Transverse colon (tissue), 4 donors: ENCODE measurements at regions of chr12 and their contacts with region 1.

Region 1: DNA sequence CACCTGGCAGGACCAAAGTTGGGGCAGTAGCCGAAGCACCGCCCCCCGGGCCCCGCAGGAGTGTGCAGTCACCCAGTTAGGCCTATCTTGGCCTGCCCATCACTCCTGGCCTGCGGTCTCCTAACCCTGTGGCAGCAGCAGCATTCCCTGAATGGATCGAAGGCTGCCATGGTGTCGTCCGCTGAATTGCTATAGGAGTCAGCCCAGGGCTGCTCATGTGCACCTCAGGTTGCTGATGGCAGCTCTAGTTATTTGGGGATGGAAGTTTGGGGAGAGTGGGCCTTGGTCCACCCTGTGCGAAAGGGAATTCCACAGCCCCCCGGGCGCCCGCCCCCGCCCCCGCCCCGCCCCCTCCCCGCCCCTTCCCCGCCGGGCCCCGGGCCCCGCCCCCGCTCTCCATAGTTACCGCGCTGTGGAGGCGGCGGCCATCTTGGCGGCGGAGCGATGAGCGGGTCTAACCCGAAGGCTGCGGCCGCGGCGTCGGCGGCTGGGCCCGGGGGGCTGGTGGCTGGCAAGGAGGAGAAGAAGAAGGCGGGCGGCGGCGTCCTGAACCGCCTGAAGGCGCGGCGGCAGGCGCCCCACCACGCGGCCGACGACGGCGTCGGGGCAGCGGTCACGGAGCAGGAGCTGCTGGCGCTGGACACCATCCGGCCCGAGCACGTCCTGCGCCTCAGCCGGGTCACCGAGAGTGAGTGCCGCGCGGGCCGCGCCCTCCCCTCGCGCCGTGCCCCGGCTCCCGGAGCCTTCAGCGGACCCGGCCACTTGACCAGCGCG is at the start of gene UNC119B:
- DNase-seq: peak; percentile 65
- H3K4me3 ChIP-seq: peak within 1 kb of the TSS; percentile 60 to 97 (median 84)
- H3K27ac ChIP-seq: peak within 1 kb of the TSS; percentile 89 to 96 (median 91)
- H3K4me1 ChIP-seq: peaks cover 7 to 24% (median 18%) of the 10 kb centered on the region in 4 donors
- H3K27me3 ChIP-seq: no peaks in the 10 kb centered on the region
- CTCF ChIP-seq: no peak
- EP300 ChIP-seq: no peak
- POLR2A ChIP-seq: no peak
- total RNA-seq, gene UNC119B: 9.8 to 25.4 (median 21.5) TPM

Region 2: GRCh38 chr12:120640840-120641833 is 69.1 kb before region 1 on chr12:
- in situ Hi-C with region 1: loop called in 3 of 4 experiments (anchors 5 to 10 kb)
- intact Hi-C with region 1: loop called (anchors 5 kb)
- DNase-seq: peak; percentile 66
- H3K4me3 ChIP-seq: peak overlapping the region in 3 of 4 donors; percentile 40 to 72 (median 52)
- H3K27ac ChIP-seq: no peak overlapping the region
- H3K4me1 ChIP-seq: peaks cover 5 to 16% (median 14%) of the 10 kb centered on the region in 4 donors
- H3K27me3 ChIP-seq: peaks cover 66% of the 10 kb centered on the region
- CTCF ChIP-seq: no peak
- EP300 ChIP-seq: no peak
- POLR2A ChIP-seq: no peak

Region 3: DNA sequence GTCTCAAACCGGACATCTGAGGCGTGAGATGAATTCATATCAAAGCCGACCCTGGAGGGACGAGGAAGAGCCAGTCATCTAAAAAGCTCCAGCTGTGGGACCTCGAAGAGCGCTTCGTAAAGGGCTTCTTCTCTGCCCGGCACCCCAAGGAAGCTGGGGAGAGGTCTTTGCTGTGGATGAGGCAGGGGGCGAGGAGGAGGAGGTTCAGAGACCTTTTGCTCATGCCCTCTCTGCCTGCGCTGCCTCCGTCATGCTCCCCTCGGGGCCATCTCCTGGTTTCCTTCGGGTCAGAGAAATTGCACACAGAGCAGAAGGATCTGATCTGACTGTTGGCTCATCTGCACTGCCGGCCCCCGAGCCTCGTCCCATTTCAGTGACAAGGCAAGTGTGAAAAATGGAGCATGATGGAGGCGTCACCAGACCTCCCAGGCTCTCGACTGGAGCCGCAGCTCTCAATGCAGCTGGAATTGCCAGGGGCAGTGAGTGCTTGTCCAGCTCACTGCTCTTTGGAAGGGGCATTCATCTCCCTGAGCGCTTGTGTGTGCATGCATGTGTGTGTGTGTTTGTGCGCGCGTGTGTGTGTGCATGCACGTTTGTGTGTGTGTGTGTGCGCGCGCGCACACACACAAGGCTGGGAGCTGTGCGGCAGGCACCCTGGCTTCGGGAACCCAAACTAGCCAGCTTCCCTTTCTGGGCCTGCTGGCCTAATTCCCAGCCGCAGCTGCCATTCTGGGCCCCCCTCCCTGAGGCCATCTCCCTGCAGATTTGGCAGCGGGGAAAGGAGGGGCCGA is 60.6 kb before region 1 on chr12:
- in situ Hi-C with region 1: loop called in 3 of 4 experiments (anchors 5 to 10 kb)
- intact Hi-C with region 1: loop called (anchors 5 kb)
- DNase-seq: no peak
- H3K4me3 ChIP-seq: peak overlapping the region in 3 of 4 donors; percentile 7 to 39 (median 25)
- H3K27ac ChIP-seq: peak overlapping the region; percentile 26 to 67 (median 64)
- H3K4me1 ChIP-seq: peaks cover 0 to 21% (median 13%) of the 10 kb centered on the region in 4 donors
- H3K27me3 ChIP-seq: peaks cover 19% of the 10 kb centered on the region
- CTCF ChIP-seq: peak in 2 of 5 experiments; percentile 16 to 35
- EP300 ChIP-seq: no peak
- POLR2A ChIP-seq: no peak